Gastrocnemius medialis (tissue), 4 donors: ENCODE measurements at regions of chr20 and their contacts with region 1.

Region 1: GRCh38 chr20:483813-484644 is 21.7 kb upstream of the TBC1D20 start:
- DNase-seq: peak in 1 of 2 donors; percentile 42
- ATAC-seq: peak; percentile 42 to 60
- H3K4me3 ChIP-seq: no peak overlapping the region
- H3K27ac ChIP-seq: peak overlapping the region; percentile 23 to 61 (median 34)
- H3K4me1 ChIP-seq: peaks cover 0 to 17% of the 10 kb centered on the region in 2 donors
- H3K27me3 ChIP-seq: no peaks in the 10 kb centered on the region
- CTCF ChIP-seq: no peak
- POLR2A ChIP-seq: no peak

Region 2: GRCh38 chr20:401682-402495 is 82.1 kb before region 1 on chr20:
- in situ Hi-C with region 1: loop called in 1 of 4 experiments (anchors 5 kb)
- intact Hi-C with region 1: no loop called
- DNase-seq: no peak
- ATAC-seq: no peak
- H3K4me3 ChIP-seq: no peak overlapping the region
- H3K27ac ChIP-seq: no peak overlapping the region
- H3K4me1 ChIP-seq: peaks cover 0 to 2% of the 10 kb centered on the region in 2 donors
- H3K27me3 ChIP-seq: no peaks in the 10 kb centered on the region
- CTCF ChIP-seq: no peak
- POLR2A ChIP-seq: no peak

Region 3: DNA sequence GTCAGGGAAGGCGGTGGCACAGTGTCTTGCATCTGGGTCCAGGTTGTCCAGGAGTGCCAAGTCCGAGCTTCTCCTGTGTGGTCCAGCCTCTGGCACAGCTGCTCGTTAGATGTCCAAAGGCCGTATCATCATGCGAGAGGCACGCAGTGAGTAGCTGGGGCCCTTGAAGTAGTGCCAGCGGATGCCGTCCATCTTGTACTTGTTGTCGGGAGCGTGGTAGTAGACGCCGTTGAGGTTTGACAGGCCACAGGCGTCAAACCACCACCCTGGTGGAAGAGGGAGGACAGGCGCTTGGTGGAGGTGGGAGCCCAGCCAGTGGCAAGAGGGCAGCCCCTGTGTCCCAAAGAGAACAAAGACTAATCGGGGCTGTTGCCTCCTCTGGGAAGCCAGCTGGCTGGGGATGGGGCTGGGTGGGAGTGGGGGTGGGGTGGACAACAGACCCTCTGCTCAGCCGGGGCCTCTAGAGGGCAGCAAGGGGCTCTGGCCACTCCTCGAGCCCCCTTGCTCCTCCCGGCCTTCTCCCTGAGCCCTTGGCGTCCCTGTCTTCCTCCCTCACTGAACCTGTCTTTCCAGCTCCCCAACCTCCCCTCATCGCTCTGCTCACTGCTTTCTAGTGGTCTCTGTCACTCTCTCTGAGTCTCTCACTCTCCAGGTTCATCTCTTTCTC is 389.0 kb after region 1 on chr20:
- in situ Hi-C with region 1: no loop called
- intact Hi-C with region 1: no loop called
- DNase-seq: no peak
- ATAC-seq: no peak
- H3K4me3 ChIP-seq: no peak overlapping the region
- H3K27ac ChIP-seq: no peak overlapping the region
- H3K4me1 ChIP-seq: no peaks in the 10 kb centered on the region
- H3K27me3 ChIP-seq: peaks cover 0 to 5% (median 4%) of the 10 kb centered on the region in 3 donors
- CTCF ChIP-seq: no peak
- POLR2A ChIP-seq: no peak

Region 4: DNA sequence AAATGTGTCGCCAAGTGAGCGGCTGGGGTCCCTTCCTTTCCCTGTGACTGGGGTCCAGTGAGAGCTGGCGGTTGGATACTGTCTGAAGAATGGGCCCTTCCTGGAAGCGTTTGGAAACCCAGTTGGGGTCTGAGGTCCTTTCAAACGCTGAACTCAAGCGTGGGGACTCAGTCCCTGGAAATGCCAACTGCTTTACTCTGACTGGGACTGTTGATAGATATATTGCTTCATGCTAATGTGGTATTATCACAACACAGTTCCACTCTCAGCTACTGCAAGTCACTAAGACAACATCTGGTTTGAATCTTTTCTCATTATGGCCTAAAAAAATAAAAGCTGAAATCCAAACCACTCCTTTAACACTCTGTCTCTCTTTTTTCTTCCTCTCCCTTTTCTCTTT is 610.7 kb after region 1 on chr20:
- in situ Hi-C with region 1: no loop called
- intact Hi-C with region 1: no loop called
- DNase-seq: no peak
- ATAC-seq: no peak
- H3K4me3 ChIP-seq: no peak overlapping the region
- H3K27ac ChIP-seq: no peak overlapping the region
- H3K4me1 ChIP-seq: no peaks in the 10 kb centered on the region
- H3K27me3 ChIP-seq: no peaks in the 10 kb centered on the region
- CTCF ChIP-seq: no peak
- POLR2A ChIP-seq: no peak